Activated CD4-positive, alpha-beta T cell treated with anti-CD3 and anti-CD28 coated beads, Interleukin-2, amount 10 ng/mL, durations not matched to agents 24 days and 14 days (primary cell): ENCODE measurements at regions of chr9 and their contacts with region 1.

Region 1: GRCh38 chr9:109520478-109521132 is 22.5 kb upstream of the PTPN3 start:
- DNase-seq: peak; percentile 85
- H3K4me3 Mint-ChIP-seq: no peak overlapping the region
- H3K27ac Mint-ChIP-seq: no peak overlapping the region
- H3K4me1 Mint-ChIP-seq: no peaks in the 10 kb centered on the region
- H3K27me3 Mint-ChIP-seq: peaks cover 11% of the 10 kb centered on the region

Region 2: DNA sequence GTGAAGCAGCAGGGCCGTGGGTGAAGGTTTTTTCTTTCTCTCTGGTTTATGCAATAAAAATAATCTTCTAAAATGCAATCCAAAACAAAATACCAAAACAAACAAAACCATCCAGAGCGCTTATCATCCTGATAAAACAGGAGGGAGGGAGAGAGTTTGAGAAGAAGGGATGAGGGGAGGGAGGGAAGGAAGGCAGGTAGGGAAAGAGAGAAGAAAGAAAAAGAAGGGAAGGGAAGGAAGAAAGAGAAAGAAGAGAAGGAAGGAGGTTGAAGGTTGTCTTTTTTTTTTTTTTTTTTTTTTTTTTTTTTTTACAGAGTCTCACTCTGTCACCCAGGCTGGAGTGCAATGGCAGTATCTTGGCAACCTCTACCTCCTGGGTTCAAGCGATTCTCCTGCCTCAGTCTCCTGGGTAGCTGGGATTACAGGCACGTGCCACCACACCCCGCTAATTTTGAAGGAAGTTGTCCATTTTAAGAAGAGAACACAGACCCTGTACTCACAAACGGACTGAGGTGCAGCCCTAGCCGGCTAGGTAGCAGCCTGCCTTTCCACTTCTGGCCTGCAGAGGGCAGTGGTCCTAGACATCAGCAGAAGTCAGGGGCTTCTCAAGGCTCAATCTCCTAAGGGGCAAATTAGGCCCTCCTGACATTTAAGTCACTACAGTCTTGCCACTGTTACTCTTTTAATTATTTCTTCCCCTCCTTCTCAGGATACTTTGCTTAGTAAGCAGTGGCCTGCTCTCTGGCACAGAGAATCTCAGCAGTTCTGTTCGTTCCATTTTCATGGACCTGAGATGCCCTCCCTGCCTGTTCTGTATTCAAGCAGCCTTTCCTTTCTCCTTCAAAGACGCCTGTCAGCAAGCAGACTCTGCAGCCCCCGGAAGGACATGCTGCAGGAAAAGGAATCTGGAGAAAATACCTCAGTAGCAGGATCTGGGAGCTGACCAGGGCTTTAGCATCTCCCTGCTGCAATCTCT is 276.2 kb before region 1 on chr9:
- intact Hi-C with region 1: loop called (anchors 1 kb)
- DNase-seq: peak; percentile 91
- H3K4me3 Mint-ChIP-seq: no peak overlapping the region
- H3K27ac Mint-ChIP-seq: no peak overlapping the region
- H3K4me1 Mint-ChIP-seq: peaks cover 4% of the 10 kb centered on the region
- H3K27me3 Mint-ChIP-seq: peaks cover 35% of the 10 kb centered on the region

Region 3: DNA sequence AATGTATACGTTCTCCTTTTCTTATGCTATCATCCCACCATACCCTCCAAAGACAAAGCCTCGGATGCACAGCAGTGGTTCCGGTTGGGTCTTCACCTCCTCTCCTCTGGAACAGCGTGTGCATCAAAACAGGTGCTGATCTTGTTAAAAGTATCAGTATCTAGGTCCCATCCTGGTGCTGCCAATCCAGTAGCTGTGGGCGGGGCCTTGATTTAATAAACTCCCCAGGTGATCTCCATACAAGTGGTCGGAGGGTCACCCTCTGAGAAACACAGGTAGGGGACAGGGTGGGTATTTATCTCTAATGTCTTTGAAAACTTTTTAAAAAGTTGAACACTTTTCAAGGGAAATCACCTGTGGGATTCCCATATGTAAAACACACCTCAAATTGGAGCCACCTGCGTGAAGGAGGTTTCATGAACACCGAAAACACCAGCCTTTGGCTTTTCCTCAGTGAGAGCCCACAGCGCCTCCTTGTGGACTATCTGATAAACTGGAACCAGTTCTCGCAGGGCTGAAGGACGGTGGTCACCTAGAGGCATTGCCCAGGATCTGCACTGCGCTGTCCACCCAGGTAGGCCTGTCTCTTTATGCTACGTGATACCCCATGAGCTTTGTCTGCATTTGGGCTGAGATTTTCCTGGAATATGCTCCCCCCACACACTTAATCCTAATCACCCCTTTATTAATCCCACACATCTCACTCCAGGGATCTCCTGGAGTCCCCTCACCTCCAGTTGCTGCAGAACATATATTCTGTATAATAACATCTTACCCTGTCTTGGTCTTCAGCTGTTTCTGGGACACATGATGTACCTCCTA is 119.2 kb before region 1 on chr9:
- intact Hi-C with region 1: loop called (anchors 5 kb)
- DNase-seq: peak; percentile 83
- H3K4me3 Mint-ChIP-seq: peak overlapping the region; percentile 9
- H3K27ac Mint-ChIP-seq: peak overlapping the region; percentile 82
- H3K4me1 Mint-ChIP-seq: peaks cover 15% of the 10 kb centered on the region
- H3K27me3 Mint-ChIP-seq: peaks cover 12% of the 10 kb centered on the region

Region 4: GRCh38 chr9:109440797-109441287 is 79.8 kb before region 1 on chr9:
- intact Hi-C with region 1: loop called (anchors 1 kb)
- DNase-seq: peak; percentile 92
- H3K4me3 Mint-ChIP-seq: no peak overlapping the region
- H3K27ac Mint-ChIP-seq: peak overlapping the region; percentile 83
- H3K4me1 Mint-ChIP-seq: peaks cover 18% of the 10 kb centered on the region
- H3K27me3 Mint-ChIP-seq: peaks cover 22% of the 10 kb centered on the region

Region 5: DNA sequence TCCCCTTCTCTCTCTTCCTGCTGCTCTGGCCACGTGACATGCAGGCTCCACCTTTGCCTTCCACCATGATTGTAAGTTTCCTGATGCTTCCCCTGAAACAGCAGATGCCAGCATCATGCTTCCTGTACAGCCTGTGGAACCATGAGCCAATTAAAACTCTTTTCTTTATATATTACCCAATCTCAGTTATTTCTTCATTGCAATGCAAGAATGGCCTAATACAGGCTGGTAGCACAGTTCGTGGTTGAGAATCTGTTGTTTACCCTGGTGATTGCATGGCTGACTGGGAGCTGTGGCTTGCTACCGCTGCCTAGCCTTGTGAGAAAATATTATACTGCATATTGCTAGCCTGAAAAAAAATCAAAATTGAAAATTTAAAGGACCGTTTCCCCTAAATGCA is 22.3 kb after region 1 on chr9:
- intact Hi-C with region 1: no loop called
- DNase-seq: no peak
- H3K4me3 Mint-ChIP-seq: no peak overlapping the region
- H3K27ac Mint-ChIP-seq: no peak overlapping the region
- H3K4me1 Mint-ChIP-seq: no peaks in the 10 kb centered on the region
- H3K27me3 Mint-ChIP-seq: peaks cover 10% of the 10 kb centered on the region